Breast epithelium (tissue), 4 donors: ENCODE measurements at regions of chr16 and their contacts with region 1.

Region 1: DNA sequence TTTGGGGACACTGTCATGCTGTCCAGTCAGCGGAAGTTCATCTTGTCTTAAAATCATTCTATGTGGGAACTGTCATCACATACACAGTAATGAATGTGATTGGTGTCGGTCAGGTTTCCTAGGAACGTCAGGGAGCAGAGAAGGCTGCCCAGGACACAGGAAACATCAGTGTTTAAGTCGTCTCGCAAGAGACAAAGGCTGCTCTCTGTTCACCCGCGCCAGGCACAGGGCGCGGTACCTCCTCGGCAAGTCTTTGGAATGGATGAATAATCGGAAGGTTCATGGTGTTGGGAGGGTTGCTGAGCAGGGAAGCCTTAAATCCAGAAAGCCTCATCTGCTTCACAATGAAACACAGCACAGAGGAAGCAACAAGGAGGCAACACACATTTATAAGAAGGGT is 148.2 kb downstream of the CPPED1 start:
- DNase-seq: no peak
- H3K4me3 ChIP-seq: no peak overlapping the region
- H3K27ac ChIP-seq: no peak overlapping the region
- H3K4me1 ChIP-seq: no peaks in the 10 kb centered on the region
- H3K27me3 ChIP-seq: no peaks in the 10 kb centered on the region
- CTCF ChIP-seq: no peak
- POLR2A ChIP-seq: no peak

Region 2: DNA sequence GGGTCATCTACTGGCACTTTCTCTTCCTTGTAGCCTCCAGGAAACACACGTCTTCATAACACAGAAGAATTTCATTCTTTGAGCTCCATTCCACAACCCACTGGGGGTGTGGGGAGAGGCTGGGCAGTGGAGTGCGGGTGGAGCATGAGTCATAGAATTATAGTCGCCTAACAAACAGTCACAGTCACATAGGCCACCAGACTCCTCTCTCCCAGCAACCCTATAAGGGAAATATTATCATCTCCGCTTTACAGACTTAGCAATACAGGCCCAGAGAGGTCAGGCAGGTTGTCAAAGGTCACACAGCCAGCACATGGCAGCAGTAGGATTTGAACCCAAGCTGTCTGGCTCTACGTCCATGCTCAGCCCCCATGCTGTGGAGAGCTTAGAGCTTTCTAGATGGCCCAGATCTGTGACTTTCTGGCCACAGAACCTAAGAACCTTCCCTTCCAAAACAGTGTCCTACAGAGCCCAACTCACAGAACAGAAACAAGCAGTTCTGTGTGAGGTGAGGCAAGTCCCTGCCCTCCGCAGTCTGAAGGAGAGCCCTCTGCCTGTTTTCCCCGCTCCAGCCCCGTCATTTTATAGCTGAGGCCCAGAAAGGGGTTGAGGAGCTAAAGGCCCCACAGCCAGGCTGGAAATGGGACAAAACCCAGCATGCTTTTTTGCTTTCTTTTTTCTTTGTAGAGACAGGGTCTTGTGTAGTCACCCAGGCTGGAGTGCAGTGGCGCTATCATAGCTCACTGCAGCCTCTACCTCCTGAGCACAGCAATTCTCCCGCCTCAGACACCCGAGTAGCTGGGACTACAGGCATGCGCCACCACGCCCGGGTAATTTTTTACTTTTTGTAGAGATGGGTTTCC is 1058.1 kb before region 1 on chr16:
- intact Hi-C with region 1: no loop called
- DNase-seq: no peak
- H3K4me3 ChIP-seq: no peak overlapping the region
- H3K27ac ChIP-seq: peak overlapping the region; percentile 85 to 88
- H3K4me1 ChIP-seq: peaks cover 0 to 9% of the 10 kb centered on the region in 2 donors
- H3K27me3 ChIP-seq: no peaks in the 10 kb centered on the region
- CTCF ChIP-seq: no peak
- POLR2A ChIP-seq: no peak

Region 3: DNA sequence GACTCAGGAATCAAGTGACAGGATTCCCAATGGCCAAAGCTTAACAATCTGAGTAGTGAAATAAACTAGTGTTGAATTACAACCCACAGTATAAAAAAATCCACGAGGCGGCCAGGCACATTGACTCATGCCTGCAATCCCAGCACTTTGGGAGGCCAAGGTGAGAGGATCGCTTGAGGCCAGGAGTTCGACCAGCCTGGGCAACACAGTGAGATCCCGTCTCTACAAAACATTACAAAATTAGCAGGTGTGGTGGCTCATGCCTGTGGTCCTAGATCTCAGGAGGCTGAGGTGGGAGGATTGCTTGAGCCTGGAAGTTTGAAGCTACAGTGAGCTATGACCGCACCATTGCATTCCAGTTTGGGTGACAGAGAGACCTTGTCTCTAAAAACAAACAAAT is 14.4 kb after region 1 on chr16:
- intact Hi-C with region 1: loop called (anchors 1 kb)
- DNase-seq: no peak
- H3K4me3 ChIP-seq: no peak overlapping the region
- H3K27ac ChIP-seq: no peak overlapping the region
- H3K4me1 ChIP-seq: no peaks in the 10 kb centered on the region
- H3K27me3 ChIP-seq: no peaks in the 10 kb centered on the region
- CTCF ChIP-seq: no peak
- POLR2A ChIP-seq: no peak